Right lobe of liver (tissue), 6 donors: ENCODE measurements at regions of chr20 and their contacts with region 1.

Region 1: DNA sequence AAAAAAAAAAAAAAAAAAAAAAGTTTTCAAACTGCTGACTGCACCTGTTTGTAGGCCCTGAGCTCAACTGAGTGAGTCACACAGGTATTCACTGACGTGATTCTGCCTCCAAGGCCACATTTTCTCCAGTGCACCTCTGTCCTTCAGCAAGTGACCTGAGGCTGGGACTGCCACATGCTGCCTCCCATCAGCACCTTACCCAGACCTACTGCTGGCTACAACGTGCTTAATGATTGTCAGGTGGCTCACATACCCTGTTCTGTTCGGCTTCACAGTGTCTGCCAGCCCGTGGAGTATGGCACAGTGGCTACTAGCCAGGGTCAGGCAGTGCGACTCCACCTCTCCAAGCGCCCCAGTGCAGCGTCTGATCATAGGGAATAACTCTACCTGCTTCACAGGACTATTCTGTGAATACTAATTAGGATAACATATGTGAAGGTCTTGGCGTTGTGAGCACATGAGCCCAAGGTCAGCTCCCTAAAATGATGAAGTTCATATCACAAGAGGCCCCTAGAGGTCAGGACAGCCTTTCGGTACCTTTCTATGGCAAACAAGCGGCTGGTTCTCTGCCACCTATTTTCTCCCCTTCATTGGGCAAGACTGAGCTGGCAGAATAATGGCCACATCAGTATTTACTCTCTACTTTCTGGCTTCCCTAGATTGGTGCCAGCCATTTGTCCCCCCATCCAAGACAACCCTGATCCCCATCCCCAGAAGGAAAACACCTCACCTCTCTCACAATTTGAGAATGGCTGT is 28.1 kb downstream of the RIPOR3 start:
- DNase-seq: peak; percentile 39 to 85 (median 72)
- ATAC-seq: peak; percentile 75 to 80 (median 76)
- H3K4me3 ChIP-seq: no peak overlapping the region
- H3K27ac ChIP-seq: peak overlapping the region; percentile 81 to 92 (median 92)
- H3K4me1 ChIP-seq: peaks cover 0 to 59% (median 25%) of the 10 kb centered on the region in 4 donors
- H3K27me3 ChIP-seq: no peaks in the 10 kb centered on the region
- CTCF ChIP-seq: peak; percentile 42 to 63 (median 57)
- POLR2A ChIP-seq: no peak

Region 2: GRCh38 chr20:50744143-50744792 is 81.0 kb after region 1 on chr20:
- intact Hi-C with region 1: loop called in 1 of 2 experiments (anchors 10 kb)
- DNase-seq: peak; percentile 60 to 79 (median 75)
- ATAC-seq: peak; percentile 82 to 90 (median 86)
- H3K4me3 ChIP-seq: peak overlapping the region in 1 of 3 donors; percentile 23
- H3K27ac ChIP-seq: peak overlapping the region; percentile 47 to 88 (median 70)
- H3K4me1 ChIP-seq: peaks cover 0 to 57% (median 21%) of the 10 kb centered on the region in 4 donors
- H3K27me3 ChIP-seq: no peaks in the 10 kb centered on the region
- CTCF ChIP-seq: peak; percentile 19 to 38 (median 28)
- POLR2A ChIP-seq: no peak